Endothelial cell of umbilical vein (primary cell): ENCODE measurements at regions of chr3 and their contacts with region 1.

Region 1: GRCh38 chr3:115169808-115170207 is 22.7 kb upstream of the ZBTB20 start:
- DNase-seq: no peak
- H3K4me3 ChIP-seq: no peak overlapping the region
- H3K27ac ChIP-seq: no peak overlapping the region
- H3K4me1 ChIP-seq: no peaks in the 10 kb centered on the region
- H3K27me3 ChIP-seq: no peaks in the 10 kb centered on the region
- CTCF ChIP-seq: no peak
- POLR2A ChIP-seq: no peak

Region 2: DNA sequence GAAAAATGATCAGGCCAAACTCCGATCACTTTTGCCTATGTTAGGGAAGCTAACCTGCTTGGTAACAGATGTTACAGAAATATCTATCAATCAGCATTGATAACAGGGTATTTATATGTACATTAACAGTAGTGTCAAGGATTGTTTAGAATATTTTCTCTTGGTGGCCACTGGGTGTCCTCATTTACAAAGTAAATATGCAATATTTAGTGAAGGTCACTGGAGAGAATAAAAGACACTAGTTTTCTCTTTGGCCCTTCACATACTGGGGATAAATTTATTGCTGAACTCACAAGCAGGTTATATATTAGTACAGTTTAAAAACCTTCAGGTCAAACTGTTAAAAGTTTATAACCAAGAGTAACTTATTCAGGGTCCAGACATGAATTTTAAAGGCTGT is 807.0 kb before region 1 on chr3:
- CTCF ChIA-PET with region 1: interaction called, 14 read pairs
- POLR2A ChIA-PET with region 1: no interaction called
- dilution Hi-C with region 1: no loop called
- intact Hi-C with region 1: no loop called
- DNase-seq: peak; percentile 29
- H3K4me3 ChIP-seq: no peak overlapping the region
- H3K27ac ChIP-seq: no peak overlapping the region
- H3K4me1 ChIP-seq: no peaks in the 10 kb centered on the region
- H3K27me3 ChIP-seq: no peaks in the 10 kb centered on the region
- CTCF ChIP-seq: peak; percentile 2 to 18
- POLR2A ChIP-seq: no peak

Region 3: DNA sequence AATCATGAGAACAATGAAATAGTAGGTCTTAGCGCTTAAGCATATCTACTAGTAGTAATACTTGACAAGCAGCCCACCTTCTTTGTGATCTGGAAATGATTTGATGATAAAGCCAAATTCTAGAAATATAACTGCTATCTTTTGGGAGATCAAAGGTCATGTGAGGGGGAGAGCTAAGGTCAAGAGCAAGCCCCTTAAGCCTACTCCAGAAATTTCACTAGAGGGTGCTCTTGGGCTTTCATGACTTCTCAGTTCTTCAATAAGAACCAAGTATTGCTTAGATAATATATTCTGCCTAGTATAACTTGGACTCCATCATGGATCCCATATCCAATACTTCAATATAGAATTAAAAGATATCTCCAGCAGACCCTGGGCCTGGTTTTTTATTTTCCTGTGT is 342.3 kb before region 1 on chr3:
- CTCF ChIA-PET with region 1: interaction called, 22 read pairs
- POLR2A ChIA-PET with region 1: no interaction called
- dilution Hi-C with region 1: no loop called
- intact Hi-C with region 1: loop called (anchors 1 kb)
- DNase-seq: peak; percentile 47
- H3K4me3 ChIP-seq: no peak overlapping the region
- H3K27ac ChIP-seq: no peak overlapping the region
- H3K4me1 ChIP-seq: no peaks in the 10 kb centered on the region
- H3K27me3 ChIP-seq: no peaks in the 10 kb centered on the region
- CTCF ChIP-seq: peak; percentile 18 to 45
- POLR2A ChIP-seq: no peak

Region 4: DNA sequence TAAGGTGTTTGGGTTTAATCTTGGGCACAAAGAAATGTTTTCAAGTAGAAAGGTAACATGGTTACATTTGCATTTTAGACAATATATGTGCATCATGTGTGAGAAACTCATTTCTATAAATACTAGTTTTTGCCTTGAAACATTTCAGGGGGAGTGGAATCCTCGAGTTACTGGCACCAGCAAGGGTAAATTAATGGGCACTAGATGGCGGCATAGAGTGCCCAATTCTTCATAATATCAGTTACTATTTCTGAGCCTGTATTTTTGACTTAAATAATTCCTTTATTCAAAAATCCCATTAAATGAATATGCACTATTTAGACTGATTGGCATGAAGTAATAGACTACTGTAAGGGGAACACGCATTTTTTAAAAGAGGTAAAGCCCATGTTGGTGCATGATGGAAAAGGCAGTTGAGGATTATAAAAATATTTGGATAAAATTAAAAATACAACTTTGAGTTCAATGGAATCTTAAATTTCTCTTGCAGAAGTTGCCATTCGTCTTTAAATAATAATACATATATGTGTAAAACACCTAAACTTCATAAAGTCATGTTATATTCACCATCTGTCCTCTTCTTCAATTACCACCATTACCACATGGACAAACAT is 129.0 kb before region 1 on chr3:
- CTCF ChIA-PET with region 1: interaction called, 18 read pairs
- POLR2A ChIA-PET with region 1: no interaction called
- dilution Hi-C with region 1: no loop called
- intact Hi-C with region 1: loop called (anchors 1 kb)
- DNase-seq: peak; percentile 67
- H3K4me3 ChIP-seq: no peak overlapping the region
- H3K27ac ChIP-seq: no peak overlapping the region
- H3K4me1 ChIP-seq: no peaks in the 10 kb centered on the region
- H3K27me3 ChIP-seq: no peaks in the 10 kb centered on the region
- CTCF ChIP-seq: peak; percentile 58 to 59
- POLR2A ChIP-seq: no peak